ENCODE measurements at regions of chr1 and their contacts with region 1.

Region 1: DNA sequence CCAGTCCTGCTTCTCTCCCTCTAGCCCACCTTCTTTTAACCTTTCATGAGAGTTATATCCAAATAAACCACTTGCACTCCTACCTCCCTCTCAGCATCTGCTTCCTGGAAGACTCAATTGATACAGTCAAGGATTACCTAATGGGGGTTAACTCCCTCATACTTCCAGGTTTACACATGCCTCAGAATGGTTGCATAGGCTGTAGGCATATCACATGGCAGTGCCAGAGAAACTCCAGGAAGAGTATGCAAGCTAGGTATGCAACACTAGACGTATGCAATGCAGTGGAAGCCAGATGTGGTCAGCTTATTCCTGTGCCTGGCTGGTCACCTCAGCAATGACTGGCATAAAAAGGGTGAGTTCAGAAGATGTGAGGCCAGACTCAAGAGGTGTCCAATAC is 32.7 kb upstream of the VANGL1 start:
- DNase-seq: no peak
- ATAC-seq: no peak
- H3K4me3 ChIP-seq: no peak overlapping the region
- H3K4me3 Mint-ChIP-seq: no peak overlapping the region
- H3K27ac ChIP-seq: no peak overlapping the region
- H3K27ac Mint-ChIP-seq: no peak overlapping the region
- H3K4me1 ChIP-seq: no peaks in the 10 kb centered on the region
- H3K4me1 Mint-ChIP-seq: no peaks in the 10 kb centered on the region
- H3K27me3 ChIP-seq: peaks cover 0 to 4% of the 10 kb centered on the region in 2 experiments
- H3K27me3 Mint-ChIP-seq: peaks cover 3% of the 10 kb centered on the region
- CTCF ChIP-seq: no peak

Region 2: GRCh38 chr1:115624859-115625258 is 15.8 kb after region 1 on chr1:
- CTCF ChIA-PET with region 1: no interaction called
- POLR2A ChIA-PET with region 1: no interaction called
- intact Hi-C with region 1: no loop called
- DNase-seq: no peak
- ATAC-seq: no peak
- H3K4me3 ChIP-seq: no peak overlapping the region
- H3K4me3 Mint-ChIP-seq: no peak overlapping the region
- H3K27ac ChIP-seq: no peak overlapping the region
- H3K27ac Mint-ChIP-seq: no peak overlapping the region
- H3K4me1 ChIP-seq: no peaks in the 10 kb centered on the region
- H3K4me1 Mint-ChIP-seq: no peaks in the 10 kb centered on the region
- H3K27me3 ChIP-seq: no peaks in the 10 kb centered on the region
- H3K27me3 Mint-ChIP-seq: peaks cover 18% of the 10 kb centered on the region
- CTCF ChIP-seq: no peak

Region 3: GRCh38 chr1:115669002-115669673 is 60.1 kb after region 1 on chr1:
- CTCF ChIA-PET with region 1: no interaction called
- POLR2A ChIA-PET with region 1: no interaction called
- intact Hi-C with region 1: no loop called
- DNase-seq: no peak
- ATAC-seq: no peak
- H3K4me3 ChIP-seq: no peak overlapping the region
- H3K4me3 Mint-ChIP-seq: no peak overlapping the region
- H3K27ac ChIP-seq: no peak overlapping the region
- H3K27ac Mint-ChIP-seq: no peak overlapping the region
- H3K4me1 ChIP-seq: no peaks in the 10 kb centered on the region
- H3K4me1 Mint-ChIP-seq: no peaks in the 10 kb centered on the region
- H3K27me3 ChIP-seq: no peaks in the 10 kb centered on the region
- H3K27me3 Mint-ChIP-seq: no peaks in the 10 kb centered on the region
- CTCF ChIP-seq: no peak

Region 4: GRCh38 chr1:115706587-115707425 is 97.8 kb after region 1 on chr1:
- CTCF ChIA-PET with region 1: no interaction called
- POLR2A ChIA-PET with region 1: no interaction called
- intact Hi-C with region 1: loop called in 1 of 2 experiments (anchors 2 kb)
- DNase-seq: peak in 3 of 14 experiments; percentile 10 to 42 (median 39)
- ATAC-seq: no peak
- H3K4me3 ChIP-seq: no peak overlapping the region
- H3K4me3 Mint-ChIP-seq: no peak overlapping the region
- H3K27ac ChIP-seq: no peak overlapping the region
- H3K27ac Mint-ChIP-seq: no peak overlapping the region
- H3K4me1 ChIP-seq: no peaks in the 10 kb centered on the region
- H3K4me1 Mint-ChIP-seq: no peaks in the 10 kb centered on the region
- H3K27me3 ChIP-seq: peaks cover 6 to 7% of the 10 kb centered on the region in 2 experiments
- H3K27me3 Mint-ChIP-seq: peaks cover 24% of the 10 kb centered on the region
- CTCF ChIP-seq: peak; percentile 74